A549 (cell line): ENCODE measurements at regions of chr7 and their contacts with region 1.

Region 1: DNA sequence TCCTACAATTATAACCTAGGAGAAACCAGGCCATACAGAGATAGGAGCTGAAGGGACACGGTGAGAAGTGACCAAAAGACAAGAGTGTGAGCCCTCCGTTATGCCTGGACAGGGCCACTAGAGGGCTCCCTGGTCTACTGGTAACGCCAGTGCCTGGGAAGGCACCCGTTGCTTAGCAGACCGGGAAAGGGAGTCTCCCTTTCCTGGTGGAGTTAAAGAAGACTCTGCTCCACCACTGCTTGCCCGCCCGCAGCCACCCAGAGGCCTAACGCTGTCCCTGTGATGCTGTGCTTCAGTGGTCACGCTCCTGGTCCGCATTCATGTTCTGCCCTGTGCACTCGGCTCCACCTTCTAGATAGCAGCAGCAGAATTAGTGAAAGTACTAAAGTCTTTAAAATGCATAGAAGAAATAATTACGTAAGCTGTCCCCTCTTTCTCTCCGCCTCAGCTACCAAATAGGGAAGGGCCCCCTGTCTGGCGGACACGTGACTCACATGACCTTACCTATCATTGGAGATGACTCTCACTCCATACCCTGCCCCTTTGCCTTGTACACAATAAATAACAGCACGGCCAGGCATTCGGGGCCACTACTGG is 34.8 kb downstream of the GRID2IP start:
- DNase-seq: peak; percentile 73 to 88
- ATAC-seq: peak; percentile 89 to 97
- H3K4me3 ChIP-seq: no peak overlapping the region
- H3K27ac ChIP-seq: peak overlapping the region in 1 of 2 experiments; percentile 44; a peak in 1 of 6 replicates
- H3K4me1 ChIP-seq: 0 out of 3 replicates have a peak, but pooled peaks cover 2% of the 10 kb centered on the region
- CTCF ChIP-seq: peak; percentile 91
- EP300 ChIP-seq: no peak
- POLR2A ChIP-seq: no peak
- RAD21 ChIP-seq: peak; percentile 79 to 87

Region 2: GRCh38 chr7:6536262-6537260 is 20.1 kb after region 1 on chr7:
- CTCF ChIA-PET with region 1: interaction called, 19 read pairs
- POLR2A ChIA-PET with region 1: no interaction called
- DNase-seq: no peak
- ATAC-seq: peak; percentile 2 to 58; a peak in 3 of 6 replicates
- H3K4me3 ChIP-seq: peak overlapping the region; percentile 47
- H3K27ac ChIP-seq: peak overlapping the region; percentile 21 to 69; a peak in 4 of 6 replicates
- H3K4me1 ChIP-seq: no peaks in the 10 kb centered on the region
- CTCF ChIP-seq: no peak
- EP300 ChIP-seq: no peak
- POLR2A ChIP-seq: no peak
- RAD21 ChIP-seq: no peak

Region 3: DNA sequence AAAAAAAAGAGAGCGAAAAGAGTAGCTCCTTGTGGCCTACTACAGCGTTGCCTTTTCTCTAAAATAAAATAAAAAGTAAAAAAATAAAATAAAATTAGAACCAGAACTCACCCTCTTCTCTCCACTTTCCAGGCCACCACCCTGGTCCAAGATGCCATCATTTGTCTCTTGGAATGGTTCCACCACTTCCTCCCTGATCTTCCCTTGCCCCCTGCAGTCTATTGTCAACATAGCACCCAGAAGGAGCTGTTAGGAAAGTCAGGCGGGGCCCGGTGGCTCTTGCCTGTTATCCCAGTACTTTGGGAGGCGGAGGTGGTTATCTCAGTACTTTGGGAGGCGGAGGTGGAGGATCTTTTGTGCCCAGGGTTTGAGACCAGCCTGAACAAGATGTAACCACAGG is 42.4 kb after region 1 on chr7:
- CTCF ChIA-PET with region 1: interaction called, 23 read pairs
- POLR2A ChIA-PET with region 1: interaction called, 3 read pairs
- DNase-seq: peak; percentile 78 to 87
- ATAC-seq: peak; percentile 91 to 93
- H3K4me3 ChIP-seq: no peak overlapping the region
- H3K27ac ChIP-seq: no peak overlapping the region
- H3K4me1 ChIP-seq: 0 out of 3 replicates have a peak, but pooled peaks cover 3% of the 10 kb centered on the region
- CTCF ChIP-seq: peak; percentile 46; the same call in 2 of the 3 replicates
- EP300 ChIP-seq: no peak
- POLR2A ChIP-seq: no peak
- RAD21 ChIP-seq: peak; percentile 56 to 67

Region 4: DNA sequence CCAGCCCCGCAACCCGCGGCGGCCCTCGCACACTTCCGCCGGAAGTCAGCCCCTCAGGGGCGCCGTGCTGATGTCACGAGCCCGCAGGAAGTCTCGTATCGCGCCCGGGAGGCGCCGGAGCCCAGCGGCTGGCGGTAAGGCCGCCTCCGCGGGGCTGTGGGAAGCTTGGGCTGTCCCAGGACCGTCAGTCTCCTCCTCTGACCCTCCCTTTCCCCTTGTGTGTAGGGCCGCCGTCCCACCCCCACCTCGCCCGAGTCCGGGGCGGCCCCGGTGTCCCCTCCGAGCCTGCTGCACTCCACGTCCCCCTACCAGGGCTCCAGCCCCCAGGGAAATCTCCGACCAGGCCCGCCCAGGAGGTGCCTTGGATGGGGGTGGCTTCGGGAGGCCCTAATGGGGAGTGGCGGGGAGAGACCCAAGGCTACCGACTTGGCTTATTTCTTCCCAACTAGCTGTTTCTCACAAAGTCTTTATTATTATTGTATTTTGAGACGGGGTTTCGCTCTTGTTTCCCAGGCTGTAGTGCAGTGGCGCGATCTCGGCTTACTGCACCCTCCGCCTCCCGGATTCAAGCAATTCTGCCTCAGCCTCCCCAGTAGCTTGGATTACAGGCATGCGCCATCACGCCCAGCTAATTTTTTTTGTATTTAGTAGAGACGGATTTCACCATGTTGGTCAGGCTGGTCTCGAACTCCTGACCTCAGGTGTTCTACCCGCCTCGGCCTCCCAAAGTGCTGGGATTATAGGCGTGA is 61.1 kb after region 1 on chr7 and contains the start of gene ZDHHC4:
- CTCF ChIA-PET with region 1: interaction called, 27 read pairs
- POLR2A ChIA-PET with region 1: interaction called, 3 read pairs
- DNase-seq: peak; percentile 93 to 99
- ATAC-seq: peak; percentile 97
- H3K4me3 ChIP-seq: peak within 1 kb of the TSS; percentile 77
- H3K27ac ChIP-seq: peak within 1 kb of the TSS; percentile 93 to 95
- H3K4me1 ChIP-seq: peaks cover 20% of the 10 kb centered on the region
- CTCF ChIP-seq: no peak
- EP300 ChIP-seq: no peak
- POLR2A ChIP-seq: peak; percentile 97
- RAD21 ChIP-seq: no peak
- polyA plus RNA-seq, gene ZDHHC4: 118 and 149 TPM in 2 replicates

Region 5: DNA sequence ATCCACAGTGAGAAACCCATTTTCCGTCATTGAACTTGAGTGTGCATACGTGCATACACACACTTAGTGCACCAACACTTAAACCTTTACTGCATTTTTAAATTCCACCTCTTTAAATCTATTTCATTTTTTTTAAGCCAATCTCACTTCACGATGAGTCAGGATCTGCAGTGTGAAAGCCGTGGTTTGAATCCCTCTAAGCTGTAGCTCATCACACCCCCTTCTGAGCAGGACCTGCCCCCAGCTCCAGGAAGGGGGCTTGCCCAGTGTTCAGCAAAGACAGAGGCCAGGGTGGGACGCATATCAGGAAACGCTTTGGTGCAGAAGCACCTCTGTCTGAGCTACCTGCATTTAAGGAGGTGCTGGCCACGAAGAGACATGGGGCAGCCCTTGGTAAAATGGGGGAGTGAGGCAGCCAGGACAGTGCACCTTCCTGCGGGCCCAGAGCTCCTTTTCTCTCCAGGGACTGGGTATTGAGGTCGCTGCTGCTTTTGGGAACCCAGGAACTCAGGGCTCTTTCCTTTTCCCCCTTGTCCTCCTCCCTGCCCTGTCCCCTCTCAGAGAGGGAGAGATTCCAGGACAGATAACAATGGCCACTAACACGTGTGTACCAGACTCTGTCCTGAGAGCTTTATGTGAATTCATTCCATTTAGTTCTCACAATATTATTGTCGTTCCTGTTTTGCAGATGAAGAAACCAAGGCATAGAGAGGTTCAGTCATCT is 142.3 kb after region 1 on chr7:
- CTCF ChIA-PET with region 1: no interaction called
- POLR2A ChIA-PET with region 1: no interaction called
- DNase-seq: no peak
- ATAC-seq: peak; percentile 31 to 59; a peak in 4 of 6 replicates
- H3K4me3 ChIP-seq: no peak overlapping the region
- H3K27ac ChIP-seq: no peak overlapping the region
- H3K4me1 ChIP-seq: no peaks in the 10 kb centered on the region
- CTCF ChIP-seq: no peak
- EP300 ChIP-seq: no peak
- POLR2A ChIP-seq: no peak
- RAD21 ChIP-seq: no peak

Region 6: GRCh38 chr7:7257899-7258692 is 741.6 kb after region 1 on chr7:
- CTCF ChIA-PET with region 1: no interaction called
- POLR2A ChIA-PET with region 1: no interaction called
- DNase-seq: no peak
- ATAC-seq: no peak
- H3K4me3 ChIP-seq: no peak overlapping the region
- H3K27ac ChIP-seq: no peak overlapping the region
- H3K4me1 ChIP-seq: no peaks in the 10 kb centered on the region
- CTCF ChIP-seq: no peak
- EP300 ChIP-seq: no peak
- POLR2A ChIP-seq: no peak
- RAD21 ChIP-seq: no peak